Heart right ventricle (tissue), 16 donors: ENCODE measurements at regions of chr18 and their contacts with region 1.

Region 1: GRCh38 chr18:58761241-58761969 is 90.1 kb downstream of the MALT1 start:
- DNase-seq: peak in 1 of 2 donors; percentile 39
- ATAC-seq: peak; percentile 56 to 83 (median 70)
- H3K4me3 ChIP-seq: no peak overlapping the region
- H3K27ac ChIP-seq: peak overlapping the region in 9 of 10 donors; percentile 23 to 75 (median 54)
- H3K4me1 ChIP-seq: peaks cover 0 to 21% (median 14%) of the 10 kb centered on the region in 9 donors
- H3K27me3 ChIP-seq: peaks cover 0 to 31% (median 0%) of the 10 kb centered on the region in 7 donors
- CTCF ChIP-seq: no peak

Region 2: GRCh38 chr18:58402247-58402646 is 359.2 kb before region 1 on chr18:
- intact Hi-C with region 1: loop called in 3 of 10 experiments (anchors 5 to 10 kb)
- DNase-seq: no peak
- ATAC-seq: peak in 4 of 8 donors; percentile 13 to 71 (median 46)
- H3K4me3 ChIP-seq: no peak overlapping the region
- H3K27ac ChIP-seq: no peak overlapping the region
- H3K4me1 ChIP-seq: peaks cover 0 to 20% (median 11%) of the 10 kb centered on the region in 9 donors
- H3K27me3 ChIP-seq: no peaks in the 10 kb centered on the region
- CTCF ChIP-seq: no peak

Region 3: GRCh38 chr18:58529714-58530354 is 231.6 kb before region 1 on chr18:
- intact Hi-C with region 1: loop called (anchors 1 to 5 kb)
- DNase-seq: peak; percentile 41 to 58
- ATAC-seq: peak; percentile 46 to 75 (median 58)
- H3K4me3 ChIP-seq: no peak overlapping the region
- H3K27ac ChIP-seq: peak overlapping the region in 2 of 10 donors; percentile 16 to 26
- H3K4me1 ChIP-seq: peaks cover 0 to 8% (median 0%) of the 10 kb centered on the region in 9 donors
- H3K27me3 ChIP-seq: no peaks in the 10 kb centered on the region
- CTCF ChIP-seq: peak; percentile 55 to 86 (median 77)

Region 4: DNA sequence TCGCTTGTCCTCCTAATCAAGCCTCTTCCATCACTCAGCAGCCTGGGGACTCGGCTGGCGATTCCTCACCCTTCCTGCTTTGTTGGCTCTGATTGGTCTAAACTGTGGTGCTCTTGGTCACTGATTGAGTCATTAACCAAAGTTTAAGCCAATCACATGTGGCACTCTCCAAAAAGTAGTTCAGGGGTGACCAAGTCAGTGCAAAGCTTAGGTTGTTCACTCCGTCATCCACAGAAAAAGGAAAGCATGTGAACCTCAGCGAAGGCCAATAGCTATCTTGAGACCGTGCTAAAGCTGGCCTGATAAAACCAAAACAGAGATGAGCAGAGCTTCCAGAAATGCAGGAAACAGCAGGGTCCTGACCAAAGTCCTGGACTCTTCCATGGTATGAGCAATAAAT is 137.4 kb before region 1 on chr18:
- intact Hi-C with region 1: loop called in 2 of 10 experiments (anchors 5 to 10 kb)
- DNase-seq: peak in 1 of 2 donors; percentile 42
- ATAC-seq: peak; percentile 48 to 86 (median 78)
- H3K4me3 ChIP-seq: no peak overlapping the region
- H3K27ac ChIP-seq: peak overlapping the region in 9 of 10 donors; percentile 36 to 91 (median 76)
- H3K4me1 ChIP-seq: peaks cover 0 to 25% (median 7%) of the 10 kb centered on the region in 9 donors
- H3K27me3 ChIP-seq: no peaks in the 10 kb centered on the region
- CTCF ChIP-seq: no peak

Region 5: DNA sequence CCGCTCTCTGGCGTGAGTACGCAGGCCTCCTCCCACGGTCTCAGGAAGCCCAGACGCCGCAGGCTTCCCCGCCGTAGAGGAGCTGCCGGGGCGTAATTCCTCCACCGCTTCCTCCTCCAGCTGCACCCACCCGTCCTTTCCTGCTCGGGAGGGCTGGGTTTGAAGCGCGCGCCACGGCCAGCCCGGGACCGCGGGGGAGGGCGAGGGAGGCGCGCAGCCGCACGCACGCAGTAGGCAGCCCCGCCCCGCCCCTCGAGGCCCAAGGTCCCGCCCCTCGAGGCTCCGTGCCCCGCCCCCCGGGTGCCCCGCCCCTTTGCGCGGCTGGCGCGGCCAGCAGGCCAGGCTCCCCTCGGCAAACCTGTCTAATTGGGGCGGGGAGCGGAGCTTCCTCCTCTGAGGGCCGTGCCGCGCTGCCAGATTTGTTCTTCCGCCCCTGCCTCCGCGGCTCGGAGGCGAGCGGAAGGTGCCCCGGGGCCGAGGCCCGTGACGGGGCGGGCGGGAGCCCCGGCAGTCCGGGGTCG is 90.2 kb before region 1 on chr18 and contains the start of gene MALT1:
- intact Hi-C with region 1: loop called in 2 of 10 experiments (anchors 5 kb)
- DNase-seq: peak; percentile 92 to 95
- ATAC-seq: peak; percentile 97 to 99 (median 98)
- H3K4me3 ChIP-seq: peak within 1 kb of the TSS; percentile 22 to 97 (median 76)
- H3K27ac ChIP-seq: peak within 1 kb of the TSS; percentile 88 to 99 (median 96)
- H3K4me1 ChIP-seq: peaks cover 0 to 42% (median 26%) of the 10 kb centered on the region in 9 donors
- H3K27me3 ChIP-seq: no peaks in the 10 kb centered on the region
- CTCF ChIP-seq: no peak
- total RNA-seq, gene MALT1: 8.1 to 20.0 (median 10.6) TPM

Region 6: DNA sequence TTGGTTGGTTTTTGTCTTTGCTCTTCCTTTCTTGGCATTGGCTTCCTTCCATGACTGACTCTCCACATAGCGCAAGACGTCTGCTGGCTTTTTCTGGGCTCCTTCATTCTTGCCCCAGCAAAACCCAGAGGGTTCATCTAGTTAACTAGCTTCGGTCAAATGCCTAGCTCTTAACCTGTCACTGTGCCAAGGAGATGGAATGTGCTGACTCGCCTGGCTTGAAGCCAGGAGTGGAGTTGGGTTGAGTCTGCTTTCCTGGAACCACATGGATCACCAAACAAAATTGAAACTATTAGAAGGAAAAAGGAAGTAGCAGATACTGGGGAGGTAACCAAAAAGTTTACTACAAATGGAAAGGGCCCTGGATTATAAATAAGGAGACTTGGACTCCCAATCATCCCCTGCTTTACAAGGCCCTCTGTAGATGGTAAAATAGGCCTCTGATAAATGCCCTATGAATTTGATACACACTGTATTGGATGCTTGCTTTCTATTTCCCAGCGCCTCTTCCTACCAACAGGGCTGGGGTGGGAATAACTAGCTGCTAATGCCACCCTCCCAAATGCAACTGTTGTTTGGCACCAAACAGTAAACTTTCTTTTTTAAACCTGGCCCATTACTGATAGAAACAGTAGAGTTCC is 78.9 kb before region 1 on chr18:
- intact Hi-C with region 1: loop called in 2 of 10 experiments (anchors 5 kb)
- DNase-seq: peak; percentile 42 to 47
- ATAC-seq: peak in 6 of 8 donors; percentile 33 to 70 (median 56)
- H3K4me3 ChIP-seq: no peak overlapping the region
- H3K27ac ChIP-seq: peak overlapping the region in 2 of 10 donors; percentile 39 to 75
- H3K4me1 ChIP-seq: peaks cover 0 to 24% (median 11%) of the 10 kb centered on the region in 9 donors
- H3K27me3 ChIP-seq: no peaks in the 10 kb centered on the region
- CTCF ChIP-seq: no peak

Region 7: GRCh38 chr18:58727776-58728500 is 33.5 kb before region 1 on chr18:
- intact Hi-C with region 1: loop called in 1 of 10 experiments (anchors 5 kb)
- DNase-seq: peak in 1 of 2 donors; percentile 28
- ATAC-seq: peak in 2 of 8 donors; percentile 71 to 76
- H3K4me3 ChIP-seq: no peak overlapping the region
- H3K27ac ChIP-seq: no peak overlapping the region
- H3K4me1 ChIP-seq: peaks cover 0 to 10% (median 0%) of the 10 kb centered on the region in 9 donors
- H3K27me3 ChIP-seq: no peaks in the 10 kb centered on the region
- CTCF ChIP-seq: no peak